Activated CD8-positive, alpha-beta memory T cell treated with anti-CD3 and anti-CD28 coated beads, Interleukin-2, amount 10 ng/mL, durations not matched to agents 7 days and 5 days (primary cell): ENCODE measurements at regions of chr1 and their contacts with region 1.

Region 1: DNA sequence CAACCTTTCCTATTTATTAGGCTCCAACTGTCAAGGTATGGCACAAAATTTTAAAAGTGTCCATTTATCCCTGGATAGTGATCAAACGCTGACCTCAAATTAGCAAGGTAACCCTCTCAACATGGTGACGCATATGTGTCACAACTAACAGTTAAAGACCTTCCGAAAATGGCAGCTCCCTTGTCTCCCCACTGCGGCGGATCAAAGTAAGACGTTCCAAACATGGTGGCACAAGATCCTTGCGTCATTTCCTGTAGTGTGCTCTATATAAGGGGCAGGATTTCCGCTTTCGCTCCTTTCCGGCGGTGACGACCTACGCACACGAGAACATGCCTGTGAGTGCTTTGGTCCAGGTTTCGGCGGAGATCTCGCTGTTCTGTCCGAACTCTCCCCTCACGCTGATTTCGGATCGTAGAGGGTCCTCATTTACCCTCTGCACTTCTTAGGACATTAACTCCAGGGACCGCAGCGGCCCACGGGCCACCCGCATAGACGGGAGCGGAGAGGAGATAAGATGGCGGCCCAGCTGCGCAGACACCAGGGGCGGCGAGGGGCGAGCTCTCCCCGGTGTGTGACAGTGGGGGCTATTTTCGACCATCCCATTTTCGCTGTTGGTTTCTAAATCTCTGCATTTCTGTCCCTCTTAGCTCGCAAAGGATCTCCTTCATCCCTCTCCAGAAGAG is at the start of gene RPS27:
- DNase-seq: peak; percentile 95
- ATAC-seq: peak; percentile 82
- H3K4me3 Mint-ChIP-seq: peak within 1 kb of the TSS; percentile 98
- H3K27ac Mint-ChIP-seq: peak within 1 kb of the TSS; percentile 99
- H3K4me1 Mint-ChIP-seq: peaks cover 45% of the 10 kb centered on the region
- H3K27me3 Mint-ChIP-seq: no peaks in the 10 kb centered on the region
- total RNA-seq, gene RPS27: 1,223 to 1,678 TPM

Region 2: DNA sequence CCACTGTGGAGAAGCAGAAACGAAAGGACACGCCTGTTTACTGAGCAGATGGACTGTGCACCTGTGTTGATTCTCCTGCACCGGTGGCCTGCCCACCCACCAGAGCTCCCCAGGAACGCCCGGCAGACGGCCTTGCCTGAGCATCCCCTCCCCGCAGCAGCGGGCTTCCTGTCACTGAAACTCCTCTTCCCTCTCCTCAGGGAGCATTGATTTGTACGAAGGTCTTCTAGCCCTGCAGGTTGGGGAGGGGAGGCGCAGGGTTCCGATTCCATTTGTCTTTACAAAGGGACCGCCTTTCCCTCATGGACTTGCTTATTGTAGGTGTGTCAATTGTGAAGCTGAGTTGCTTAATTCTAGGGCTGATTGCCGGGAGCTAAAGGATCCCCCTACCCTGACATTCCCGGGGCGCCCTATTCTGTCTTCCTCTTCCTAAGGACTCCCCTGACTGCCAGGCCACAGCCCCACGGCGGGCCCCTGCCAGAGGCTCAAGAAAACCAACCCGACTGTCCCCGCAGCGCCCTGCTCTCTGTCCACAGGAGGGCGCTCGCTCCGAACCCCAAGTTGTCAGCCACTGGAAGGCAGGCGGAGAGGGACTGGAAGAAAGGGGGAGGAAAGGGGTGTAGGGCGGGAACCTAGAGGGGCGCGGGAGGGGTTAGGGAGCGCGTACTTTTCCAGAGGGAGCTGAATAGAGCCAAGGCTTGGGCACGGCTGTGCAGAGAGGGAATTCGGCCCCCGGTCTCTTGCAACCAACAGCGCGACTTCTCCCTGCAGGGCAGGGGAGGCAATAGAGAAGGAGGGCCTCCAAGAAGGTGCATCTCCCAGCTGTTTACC is 457.6 kb before region 1 on chr1:
- CTCF ChIA-PET with region 1: interaction called, 12 read pairs
- DNase-seq: peak; percentile 89
- ATAC-seq: peak; percentile 32
- H3K4me3 Mint-ChIP-seq: peak overlapping the region; percentile 97
- H3K27ac Mint-ChIP-seq: peak overlapping the region; percentile 95
- H3K4me1 Mint-ChIP-seq: peaks cover 62% of the 10 kb centered on the region
- H3K27me3 Mint-ChIP-seq: no peaks in the 10 kb centered on the region

Region 3: GRCh38 chr1:153677718-153678505 is 312.7 kb before region 1 on chr1:
- CTCF ChIA-PET with region 1: interaction called, 26 read pairs
- DNase-seq: peak; percentile 63
- ATAC-seq: no peak
- H3K4me3 Mint-ChIP-seq: peak overlapping the region; percentile 72
- H3K27ac Mint-ChIP-seq: no peak overlapping the region
- H3K4me1 Mint-ChIP-seq: peaks cover 19% of the 10 kb centered on the region
- H3K27me3 Mint-ChIP-seq: peaks cover 56% of the 10 kb centered on the region

Region 4: GRCh38 chr1:153796791-153797659 is 193.6 kb before region 1 on chr1:
- CTCF ChIA-PET with region 1: interaction called, 96 read pairs
- DNase-seq: peak; percentile 91
- ATAC-seq: peak; percentile 75
- H3K4me3 Mint-ChIP-seq: no peak overlapping the region
- H3K27ac Mint-ChIP-seq: peak overlapping the region; percentile 13
- H3K4me1 Mint-ChIP-seq: peaks cover 26% of the 10 kb centered on the region
- H3K27me3 Mint-ChIP-seq: no peaks in the 10 kb centered on the region

Region 5: DNA sequence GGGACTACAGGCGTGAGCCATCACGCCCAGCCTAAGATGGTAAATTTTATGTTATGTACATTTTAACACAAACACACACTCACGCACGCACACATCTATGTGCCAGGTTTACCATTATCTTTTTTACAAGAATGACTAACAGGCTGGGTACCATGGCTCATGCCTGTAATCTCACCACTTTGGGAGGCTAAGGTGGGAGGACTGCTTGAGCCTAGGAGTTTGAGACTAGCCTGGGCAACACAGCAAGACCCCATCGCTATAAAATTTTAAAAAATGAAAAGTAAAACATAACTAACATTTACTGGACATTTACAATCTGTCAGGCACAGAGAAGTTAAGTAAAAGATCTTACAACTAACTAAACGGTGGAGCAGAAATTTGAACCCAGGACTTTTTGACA is 82.5 kb before region 1 on chr1:
- CTCF ChIA-PET with region 1: no interaction called
- DNase-seq: no peak
- ATAC-seq: no peak
- H3K4me3 Mint-ChIP-seq: no peak overlapping the region
- H3K27ac Mint-ChIP-seq: no peak overlapping the region
- H3K4me1 Mint-ChIP-seq: peaks cover 18% of the 10 kb centered on the region
- H3K27me3 Mint-ChIP-seq: no peaks in the 10 kb centered on the region

Region 6: GRCh38 chr1:153922972-153923925 is 67.4 kb before region 1 on chr1 and contains the start of gene GATAD2B:
- CTCF ChIA-PET with region 1: interaction called, 20 read pairs
- DNase-seq: peak; percentile 100
- ATAC-seq: peak; percentile 95
- H3K4me3 Mint-ChIP-seq: peak within 1 kb of the TSS; percentile 96
- H3K27ac Mint-ChIP-seq: peak within 1 kb of the TSS; percentile 95
- H3K4me1 Mint-ChIP-seq: peaks cover 44% of the 10 kb centered on the region
- H3K27me3 Mint-ChIP-seq: no peaks in the 10 kb centered on the region
- total RNA-seq, gene GATAD2B: 72.5 to 77.9 TPM

Region 7: GRCh38 chr1:153958111-153958960 is 32.3 kb before region 1 on chr1 and contains the start of gene CRTC2:
- CTCF ChIA-PET with region 1: interaction called, 21 read pairs
- DNase-seq: peak; percentile 100
- ATAC-seq: peak; percentile 87
- H3K4me3 Mint-ChIP-seq: peak within 1 kb of the TSS; percentile 97
- H3K27ac Mint-ChIP-seq: peak within 1 kb of the TSS; percentile 98
- H3K4me1 Mint-ChIP-seq: peaks cover 57% of the 10 kb centered on the region
- H3K27me3 Mint-ChIP-seq: no peaks in the 10 kb centered on the region
- total RNA-seq, gene CRTC2: 86.3 to 98.5 TPM

Region 8: GRCh38 chr1:153977250-153978240 is 13.1 kb before region 1 on chr1 and contains the start of gene JTB:
- CTCF ChIA-PET with region 1: interaction called, 65 read pairs
- DNase-seq: peak; percentile 91
- ATAC-seq: peak; percentile 97
- H3K4me3 Mint-ChIP-seq: peak within 1 kb of the TSS; percentile 95
- H3K27ac Mint-ChIP-seq: peak within 1 kb of the TSS; percentile 94
- H3K4me1 Mint-ChIP-seq: peaks cover 41% of the 10 kb centered on the region
- H3K27me3 Mint-ChIP-seq: no peaks in the 10 kb centered on the region
- total RNA-seq, gene JTB: 127 to 156 TPM